Activated T-helper 2 cell treated with anti-CD3 and anti-CD28 coated beads, Interferon-gamma antibody, Interleukin-2, Interleukin-4, amounts not matched to agents 10 μg/mL and 5 μg/mL and 100 μg/mL, durations not matched to agents 14 hours and 24 hours and 36 hours (primary cell): ENCODE measurements at regions of chr3 and their contacts with region 1.

Region 1: DNA sequence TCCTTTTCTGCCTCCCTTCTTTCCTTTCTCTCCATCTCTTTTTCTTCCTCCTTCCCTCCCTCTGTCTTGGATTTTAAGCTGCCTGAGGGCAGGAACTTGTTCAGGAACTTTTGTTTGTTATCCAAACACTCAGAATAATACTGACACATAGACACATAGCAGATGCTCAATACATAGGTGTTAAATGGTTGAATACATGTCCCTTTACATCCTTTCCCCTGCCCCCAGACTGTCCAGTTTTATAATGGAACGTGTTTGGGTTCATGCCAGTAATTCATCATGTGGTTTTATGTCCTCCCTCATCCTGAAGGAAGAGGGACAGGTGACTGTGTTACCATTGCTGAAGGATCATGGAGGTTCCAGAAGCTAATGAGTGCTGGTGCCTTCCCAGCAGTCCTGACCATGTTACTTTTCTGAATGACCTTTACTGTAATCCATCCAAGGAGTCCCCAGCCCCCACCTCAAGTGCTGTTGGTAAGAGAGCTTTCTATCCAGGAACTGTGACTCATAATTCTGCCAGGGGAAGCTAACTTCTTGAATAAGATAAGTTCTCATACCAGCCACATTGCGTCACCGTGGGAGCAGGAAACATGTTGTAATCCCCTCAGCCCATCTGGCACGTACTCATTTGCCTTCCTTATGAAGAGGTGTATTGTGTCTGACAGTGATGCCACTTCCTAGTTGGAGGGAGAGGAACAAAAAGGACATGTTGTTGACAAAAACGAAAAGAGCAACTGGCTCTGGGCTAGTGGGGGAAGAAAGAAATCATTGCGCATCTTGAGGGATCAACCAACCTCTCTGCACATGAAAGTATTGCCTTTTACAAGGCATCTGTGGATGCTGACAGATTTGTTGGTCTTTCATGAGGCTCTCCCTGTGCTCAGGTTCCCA is 52.4 kb downstream of the IL1RAP start:
- DNase-seq: peak; percentile 70
- H3K4me3 Mint-ChIP-seq: peak overlapping the region; percentile 38
- H3K27ac Mint-ChIP-seq: peak overlapping the region; percentile 91
- H3K4me1 Mint-ChIP-seq: peaks cover 81% of the 10 kb centered on the region
- H3K27me3 Mint-ChIP-seq: no peaks in the 10 kb centered on the region

Region 2: GRCh38 chr3:190491533-190492054 is 74.7 kb before region 1 on chr3:
- intact Hi-C with region 1: loop called (anchors 2 kb)
- DNase-seq: no peak
- H3K4me3 Mint-ChIP-seq: no peak overlapping the region
- H3K27ac Mint-ChIP-seq: no peak overlapping the region
- H3K4me1 Mint-ChIP-seq: peaks cover 35% of the 10 kb centered on the region
- H3K27me3 Mint-ChIP-seq: peaks cover 73% of the 10 kb centered on the region

Region 3: GRCh38 chr3:190533511-190534277 is 32.6 kb before region 1 on chr3:
- intact Hi-C with region 1: loop called (anchors 2 kb)
- DNase-seq: no peak
- H3K4me3 Mint-ChIP-seq: no peak overlapping the region
- H3K27ac Mint-ChIP-seq: peak overlapping the region; percentile 42
- H3K4me1 Mint-ChIP-seq: peaks cover 55% of the 10 kb centered on the region
- H3K27me3 Mint-ChIP-seq: no peaks in the 10 kb centered on the region

Region 4: GRCh38 chr3:190546881-190547510 is 19.3 kb before region 1 on chr3:
- intact Hi-C with region 1: no loop called
- DNase-seq: no peak
- H3K4me3 Mint-ChIP-seq: no peak overlapping the region
- H3K27ac Mint-ChIP-seq: no peak overlapping the region
- H3K4me1 Mint-ChIP-seq: peaks cover 20% of the 10 kb centered on the region
- H3K27me3 Mint-ChIP-seq: no peaks in the 10 kb centered on the region

Region 5: DNA sequence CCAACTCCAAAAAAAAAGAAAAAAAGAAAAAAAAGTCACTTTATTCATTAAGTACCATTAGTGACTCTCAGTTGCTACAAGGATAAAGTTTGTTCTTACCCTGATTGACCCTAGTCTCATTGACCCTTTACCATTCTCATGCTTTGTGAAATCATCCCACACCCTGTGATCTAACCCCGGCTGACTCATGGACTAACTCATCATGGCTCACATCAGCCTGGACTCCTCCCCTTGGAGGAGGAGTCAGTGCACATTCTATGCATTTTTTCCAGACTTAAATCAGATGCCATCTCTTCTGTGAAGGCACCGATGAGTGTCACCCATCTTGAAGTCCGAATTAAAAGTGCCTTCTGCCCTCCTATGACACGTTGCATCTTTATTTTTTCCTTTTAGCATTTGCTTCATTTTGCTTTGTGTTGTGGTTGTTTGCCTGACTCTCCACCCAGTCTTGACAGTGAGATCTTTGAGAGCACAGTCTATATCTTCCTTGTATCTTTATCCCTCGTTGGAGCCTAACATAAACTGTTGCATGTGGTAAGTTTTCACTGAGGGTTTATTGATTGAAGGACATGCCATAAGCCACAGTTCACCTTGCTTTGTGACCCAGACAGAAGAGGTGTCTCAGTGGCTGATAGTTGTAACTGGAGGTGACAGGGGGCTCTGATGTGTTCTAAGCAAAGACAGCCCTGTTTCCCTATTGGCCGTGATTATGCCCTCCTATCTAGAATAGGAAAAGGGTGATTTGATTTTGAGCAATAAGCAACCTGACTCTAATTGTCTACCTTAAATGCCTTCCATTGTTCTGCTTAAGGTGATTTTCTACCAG is 19.7 kb after region 1 on chr3:
- intact Hi-C with region 1: loop called (anchors 1 kb)
- DNase-seq: peak; percentile 59
- H3K4me3 Mint-ChIP-seq: peak overlapping the region; percentile 73
- H3K27ac Mint-ChIP-seq: peak overlapping the region; percentile 95
- H3K4me1 Mint-ChIP-seq: peaks cover 78% of the 10 kb centered on the region
- H3K27me3 Mint-ChIP-seq: no peaks in the 10 kb centered on the region

Region 6: GRCh38 chr3:190596349-190597285 is 30.3 kb after region 1 on chr3:
- intact Hi-C with region 1: no loop called
- DNase-seq: no peak
- H3K4me3 Mint-ChIP-seq: no peak overlapping the region
- H3K27ac Mint-ChIP-seq: no peak overlapping the region
- H3K4me1 Mint-ChIP-seq: peaks cover 40% of the 10 kb centered on the region
- H3K27me3 Mint-ChIP-seq: no peaks in the 10 kb centered on the region

Region 7: GRCh38 chr3:190701096-190701532 is 134.8 kb after region 1 on chr3:
- intact Hi-C with region 1: loop called (anchors 5 kb)
- DNase-seq: no peak
- H3K4me3 Mint-ChIP-seq: no peak overlapping the region
- H3K27ac Mint-ChIP-seq: no peak overlapping the region
- H3K4me1 Mint-ChIP-seq: peaks cover 8% of the 10 kb centered on the region
- H3K27me3 Mint-ChIP-seq: peaks cover 33% of the 10 kb centered on the region